CD8-positive, alpha-beta memory T cell (primary cell): ENCODE measurements at regions of chr9 and their contacts with region 1.

Region 1: DNA sequence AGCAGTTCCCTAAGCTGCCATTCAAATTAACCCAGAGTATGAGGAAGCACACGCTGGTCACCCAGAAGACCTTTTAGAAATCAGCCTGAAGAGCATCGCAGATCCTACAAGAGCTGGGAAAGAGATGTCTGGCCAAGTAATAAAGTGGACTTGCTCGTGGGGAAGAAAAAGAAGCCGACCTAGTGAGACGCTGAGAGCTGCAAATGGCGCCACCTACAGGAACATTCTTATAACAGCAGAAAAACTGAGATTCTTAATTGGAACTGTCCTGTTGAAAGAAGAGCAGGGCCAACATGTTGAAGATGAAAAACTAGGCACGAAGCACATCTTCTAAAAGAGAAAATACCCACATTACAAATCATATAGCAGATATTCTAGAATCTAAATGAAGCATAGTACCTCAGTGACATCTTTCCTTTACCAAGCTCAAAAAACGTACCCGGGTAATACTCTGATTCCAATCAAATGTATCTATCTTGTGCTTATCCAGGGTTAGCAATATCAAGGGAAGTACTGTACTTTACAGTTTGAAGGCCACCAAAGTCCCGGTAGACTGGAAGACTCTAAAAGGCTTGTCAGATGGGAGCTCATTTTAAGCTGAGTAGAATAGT is 3.9 kb upstream of the GNAQ start:
- DNase-seq: peak in 4 of 5 donors; percentile 24 to 64 (median 58)
- H3K4me3 ChIP-seq: no peak overlapping the region
- H3K4me3 Mint-ChIP-seq: peak overlapping the region in 3 of 7 donors; percentile 0 to 28 (median 20)
- H3K27ac ChIP-seq: no peak overlapping the region
- H3K27ac Mint-ChIP-seq: peak overlapping the region in 3 of 8 donors; percentile 8 to 43 (median 9)
- H3K4me1 ChIP-seq: peaks cover 24% of the 10 kb centered on the region
- H3K4me1 Mint-ChIP-seq: peaks cover 22 to 38% (median 34%) of the 10 kb centered on the region in 3 donors
- H3K27me3 ChIP-seq: no peaks in the 10 kb centered on the region
- H3K27me3 Mint-ChIP-seq: peaks cover 3 to 28% of the 10 kb centered on the region in 2 donors

Region 2: GRCh38 chr9:77952642-77953328 is 82.7 kb before region 1 on chr9:
- CTCF ChIA-PET with region 1: no interaction called
- POLR2A ChIA-PET with region 1: no interaction called
- DNase-seq: no peak
- H3K4me3 ChIP-seq: no peak overlapping the region
- H3K4me3 Mint-ChIP-seq: no peak overlapping the region
- H3K27ac ChIP-seq: no peak overlapping the region
- H3K27ac Mint-ChIP-seq: no peak overlapping the region
- H3K4me1 ChIP-seq: peaks cover 16% of the 10 kb centered on the region
- H3K4me1 Mint-ChIP-seq: peaks cover 20 to 44% (median 42%) of the 10 kb centered on the region in 3 donors
- H3K27me3 ChIP-seq: no peaks in the 10 kb centered on the region
- H3K27me3 Mint-ChIP-seq: no peaks in the 10 kb centered on the region

Region 3: GRCh38 chr9:77977210-77977611 is 58.3 kb before region 1 on chr9:
- CTCF ChIA-PET with region 1: interaction called, 15 read pairs
- POLR2A ChIA-PET with region 1: no interaction called
- DNase-seq: peak in 4 of 5 donors; percentile 15 to 59 (median 34)
- H3K4me3 ChIP-seq: peak overlapping the region; percentile 29
- H3K4me3 Mint-ChIP-seq: peak overlapping the region in 4 of 7 donors; percentile 1 to 25 (median 18)
- H3K27ac ChIP-seq: no peak overlapping the region
- H3K27ac Mint-ChIP-seq: peak overlapping the region; percentile 2 to 52 (median 38)
- H3K4me1 ChIP-seq: peaks cover 52% of the 10 kb centered on the region
- H3K4me1 Mint-ChIP-seq: peaks cover 46 to 59% (median 51%) of the 10 kb centered on the region in 3 donors
- H3K27me3 ChIP-seq: no peaks in the 10 kb centered on the region
- H3K27me3 Mint-ChIP-seq: no peaks in the 10 kb centered on the region

Region 4: GRCh38 chr9:78053627-78054026 is 18.1 kb after region 1 on chr9:
- CTCF ChIA-PET with region 1: interaction called, 30 read pairs
- POLR2A ChIA-PET with region 1: interaction called, 5 read pairs
- DNase-seq: no peak
- H3K4me3 ChIP-seq: no peak overlapping the region
- H3K4me3 Mint-ChIP-seq: peak overlapping the region in 2 of 7 donors; percentile 3 to 29
- H3K27ac ChIP-seq: no peak overlapping the region
- H3K27ac Mint-ChIP-seq: no peak overlapping the region
- H3K4me1 ChIP-seq: peaks cover 16% of the 10 kb centered on the region
- H3K4me1 Mint-ChIP-seq: peaks cover 15 to 21% (median 20%) of the 10 kb centered on the region in 3 donors
- H3K27me3 ChIP-seq: no peaks in the 10 kb centered on the region
- H3K27me3 Mint-ChIP-seq: peaks cover 1 to 4% of the 10 kb centered on the region in 2 donors